Activated naive CD4-positive, alpha-beta T cell treated with anti-CD3 and anti-CD28 coated beads, Interleukin-2, amount 10 ng/mL, durations not matched to agents 7 days and 5 days (primary cell): ENCODE measurements at regions of chr5 and their contacts with region 1.

Region 1: DNA sequence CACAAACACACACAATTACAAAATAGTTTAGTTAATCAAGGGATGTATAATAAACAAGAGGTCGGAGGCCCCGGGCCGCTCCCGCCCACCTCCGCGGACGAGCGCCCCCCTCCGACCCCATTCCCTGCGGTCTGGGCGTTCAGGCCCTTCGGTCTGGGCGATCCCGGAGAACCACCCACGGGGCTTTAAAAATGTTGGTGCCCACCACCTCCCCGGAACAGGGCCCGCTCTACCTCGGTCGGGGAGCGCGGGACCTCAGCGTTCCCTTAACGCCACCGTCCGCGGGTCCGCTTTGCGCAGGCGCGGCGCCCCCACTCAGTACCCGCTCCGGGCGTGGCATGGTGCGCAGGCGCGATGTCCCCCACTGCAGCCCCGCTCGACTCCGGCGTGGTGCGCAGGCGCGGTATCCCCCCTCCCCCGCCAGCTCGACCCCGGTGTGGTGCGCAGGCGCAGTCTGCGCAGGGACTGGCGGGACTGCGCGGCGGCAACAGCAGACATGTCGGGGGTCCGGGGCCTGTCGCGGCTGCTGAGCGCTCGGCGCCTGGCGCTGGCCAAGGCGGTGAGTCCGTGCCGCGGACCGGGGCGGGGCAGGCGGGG is at the starts of genes CCDC127 and SDHA:
- DNase-seq: peak; percentile 97
- H3K4me3 Mint-ChIP-seq: peak within 1 kb of the TSS; percentile 95
- H3K27ac Mint-ChIP-seq: peak within 1 kb of the TSS; percentile 97
- H3K4me1 Mint-ChIP-seq: peaks cover 57% of the 10 kb centered on the region
- H3K27me3 Mint-ChIP-seq: no peaks in the 10 kb centered on the region

Region 2: GRCh38 chr5:188488-189481 is 29.2 kb before region 1 on chr5:
- CTCF ChIA-PET with region 1: interaction called, 13 read pairs
- DNase-seq: peak; percentile 93
- H3K4me3 Mint-ChIP-seq: no peak overlapping the region
- H3K27ac Mint-ChIP-seq: no peak overlapping the region
- H3K4me1 Mint-ChIP-seq: peaks cover 9% of the 10 kb centered on the region
- H3K27me3 Mint-ChIP-seq: peaks cover 31% of the 10 kb centered on the region